Esophagus squamous epithelium (tissue), 5 donors: ENCODE measurements at regions of chr14 and their contacts with region 1.

Region 1: DNA sequence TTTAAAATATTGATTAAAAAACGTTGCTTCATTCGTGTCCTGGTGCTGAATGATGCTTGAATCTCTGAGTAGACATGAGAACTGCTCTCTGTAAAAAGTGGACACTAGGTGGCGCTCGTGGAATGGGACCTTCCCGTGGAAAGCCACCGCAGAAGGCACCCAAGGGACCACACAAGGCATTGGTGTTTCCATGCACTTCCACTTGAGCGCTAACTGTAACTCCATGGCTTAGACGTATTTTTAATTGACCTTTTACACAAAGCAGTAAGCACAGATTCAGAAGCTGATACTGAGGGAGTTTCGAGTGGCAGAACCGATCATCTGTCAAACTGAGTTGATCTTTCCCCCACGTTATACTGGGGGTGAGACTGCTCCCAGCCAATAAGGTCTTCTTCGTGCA is 135.3 kb downstream of the PRKCH start:
- DNase-seq: no peak
- H3K4me3 ChIP-seq: no peak overlapping the region
- H3K27ac ChIP-seq: no peak overlapping the region
- H3K4me1 ChIP-seq: peaks cover 0 to 9% (median 0%) of the 10 kb centered on the region in 3 donors
- H3K27me3 ChIP-seq: no peaks in the 10 kb centered on the region
- CTCF ChIP-seq: peak; percentile 83 to 88 (median 86)
- POLR2A ChIP-seq: no peak

Region 2: DNA sequence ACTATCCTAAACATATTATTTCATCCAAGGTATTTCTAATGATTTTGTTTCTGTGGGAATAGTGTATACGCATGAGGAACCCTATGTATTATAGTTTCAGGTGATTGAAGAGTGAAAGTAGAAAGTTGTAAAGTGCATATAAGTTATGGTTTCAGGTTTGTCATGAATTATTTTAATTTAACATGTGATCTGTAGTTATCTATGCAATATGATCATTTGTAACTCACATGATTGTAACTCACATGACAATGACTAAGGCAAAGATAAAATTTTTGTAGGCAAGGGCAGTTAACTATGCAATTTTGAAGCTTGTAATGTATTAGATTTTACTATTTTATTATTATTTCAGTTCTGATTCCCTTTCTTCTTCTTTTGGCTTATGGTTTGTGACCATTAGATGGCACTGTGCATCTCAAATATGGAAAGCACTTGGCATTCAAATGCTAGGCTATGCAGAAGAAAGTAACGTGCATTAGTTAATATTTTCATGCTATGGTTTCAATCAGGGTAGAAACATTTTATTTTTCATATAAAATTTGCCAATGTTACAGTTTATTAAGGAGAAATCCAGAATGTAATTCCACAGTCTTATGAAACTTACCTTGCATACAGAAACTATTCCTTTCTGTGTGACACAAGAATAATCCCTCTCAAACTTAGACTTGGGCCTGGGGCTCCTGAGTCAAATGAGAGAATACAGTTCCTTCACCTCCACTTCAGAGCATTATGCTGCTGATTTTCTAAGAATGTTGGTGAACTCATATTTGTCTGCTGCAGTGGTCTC is 159.8 kb before region 1 on chr14:
- intact Hi-C with region 1: loop called (anchors 10 kb)
- DNase-seq: no peak
- H3K4me3 ChIP-seq: no peak overlapping the region
- H3K27ac ChIP-seq: no peak overlapping the region
- H3K4me1 ChIP-seq: peaks cover 0 to 8% (median 0%) of the 10 kb centered on the region in 3 donors
- H3K27me3 ChIP-seq: no peaks in the 10 kb centered on the region
- CTCF ChIP-seq: peak in 5 of 6 experiments; percentile 44 to 77 (median 62)
- POLR2A ChIP-seq: no peak

Region 3: GRCh38 chr14:61837336-61838229 is 380.9 kb after region 1 on chr14:
- intact Hi-C with region 1: loop called (anchors 5 kb)
- DNase-seq: peak; percentile 6
- H3K4me3 ChIP-seq: no peak overlapping the region
- H3K27ac ChIP-seq: no peak overlapping the region
- H3K4me1 ChIP-seq: peaks cover 0 to 11% (median 0%) of the 10 kb centered on the region in 3 donors
- H3K27me3 ChIP-seq: no peaks in the 10 kb centered on the region
- CTCF ChIP-seq: peak; percentile 91 to 96 (median 94)
- POLR2A ChIP-seq: no peak